ENCODE measurements at regions of chr11 and their contacts with region 1.

Region 1: DNA sequence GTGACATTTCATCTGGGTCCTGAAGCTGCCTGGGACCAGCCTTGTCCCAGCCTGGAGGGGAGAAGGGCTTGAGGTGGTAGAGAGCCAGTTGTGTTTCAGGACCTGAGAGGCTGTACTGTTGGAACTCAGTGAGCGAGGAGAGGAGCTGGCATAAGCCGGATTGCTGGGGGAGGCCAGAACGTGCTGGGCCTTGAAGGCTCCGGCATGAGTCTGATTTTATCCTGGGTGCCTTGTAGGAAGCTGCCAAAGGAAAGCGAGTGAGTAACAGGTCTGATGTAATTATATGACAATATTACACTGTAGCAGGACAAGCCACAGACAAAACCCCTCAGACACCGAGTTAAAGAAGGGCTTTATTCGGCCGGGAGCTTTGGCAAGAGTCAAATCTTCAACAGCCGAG is 17.2 kb downstream of the AP2A2 start:
- DNase-seq: no peak
- ATAC-seq: no peak
- H3K4me3 ChIP-seq: no peak overlapping the region
- H3K4me3 Mint-ChIP-seq: no peak overlapping the region
- H3K27ac ChIP-seq: no peak overlapping the region
- H3K27ac Mint-ChIP-seq: peak overlapping the region in 1 of 2 donors; percentile 16
- H3K4me1 ChIP-seq: peaks cover 5% of the 10 kb centered on the region
- H3K4me1 Mint-ChIP-seq: peaks cover 55 to 62% of the 10 kb centered on the region in 2 donors
- H3K27me3 ChIP-seq: no peaks in the 10 kb centered on the region
- H3K27me3 Mint-ChIP-seq: no peaks in the 10 kb centered on the region
- CTCF ChIP-seq: no peak

Region 2: DNA sequence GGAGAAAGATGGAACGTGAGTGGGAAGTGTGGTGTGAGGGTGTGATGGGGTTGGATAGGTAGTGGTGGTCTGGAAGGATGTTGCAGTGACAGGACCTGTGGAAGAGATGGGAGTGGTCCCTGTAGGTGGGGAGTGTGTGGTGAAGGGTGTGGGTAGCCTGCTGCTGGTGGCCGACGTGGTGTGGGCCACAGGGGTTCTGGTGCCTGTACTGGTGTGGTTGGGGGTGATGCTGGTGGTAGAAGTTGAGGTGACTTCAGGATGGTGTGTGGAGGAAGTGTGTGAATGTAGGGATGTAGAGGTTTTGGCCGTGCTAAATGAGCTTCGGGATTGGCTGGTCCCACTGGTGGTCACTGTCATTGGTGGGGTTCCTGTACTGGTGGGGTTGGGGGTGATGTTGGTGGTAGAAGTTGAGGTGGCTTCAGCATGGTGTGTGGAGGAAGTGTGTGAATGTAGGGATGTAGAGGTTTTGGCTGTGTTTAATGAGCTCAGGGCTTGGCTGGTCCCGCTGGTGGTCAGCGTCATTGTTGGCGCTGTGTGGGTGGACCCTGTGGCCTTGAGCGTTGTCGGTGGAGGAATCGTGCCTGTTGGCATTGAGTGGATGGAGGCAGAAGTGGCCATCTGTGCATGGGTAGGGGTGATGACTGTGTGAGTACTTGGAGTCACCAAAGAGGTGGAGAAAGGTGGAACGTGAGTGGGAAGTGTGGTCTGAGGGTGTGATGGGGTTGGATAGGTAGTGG is 74.6 kb after region 1 on chr11:
- intact Hi-C with region 1: loop called (anchors 10 kb)
- DNase-seq: peak; percentile 19 to 28
- ATAC-seq: peak; percentile 29 to 45 (median 43)
- H3K4me3 ChIP-seq: no peak overlapping the region
- H3K4me3 Mint-ChIP-seq: peak overlapping the region; percentile 41
- H3K27ac ChIP-seq: no peak overlapping the region
- H3K27ac Mint-ChIP-seq: peak overlapping the region; percentile 1 to 11
- H3K4me1 ChIP-seq: peaks cover 35% of the 10 kb centered on the region
- H3K4me1 Mint-ChIP-seq: peaks cover 28 to 36% of the 10 kb centered on the region in 2 donors
- H3K27me3 ChIP-seq: no peaks in the 10 kb centered on the region
- H3K27me3 Mint-ChIP-seq: no peaks in the 10 kb centered on the region
- CTCF ChIP-seq: no peak

Measured in natural killer cell (primary cell).